MCF 10A (cell line): ENCODE measurements at regions of chr12 and their contacts with region 1.

Region 1: DNA sequence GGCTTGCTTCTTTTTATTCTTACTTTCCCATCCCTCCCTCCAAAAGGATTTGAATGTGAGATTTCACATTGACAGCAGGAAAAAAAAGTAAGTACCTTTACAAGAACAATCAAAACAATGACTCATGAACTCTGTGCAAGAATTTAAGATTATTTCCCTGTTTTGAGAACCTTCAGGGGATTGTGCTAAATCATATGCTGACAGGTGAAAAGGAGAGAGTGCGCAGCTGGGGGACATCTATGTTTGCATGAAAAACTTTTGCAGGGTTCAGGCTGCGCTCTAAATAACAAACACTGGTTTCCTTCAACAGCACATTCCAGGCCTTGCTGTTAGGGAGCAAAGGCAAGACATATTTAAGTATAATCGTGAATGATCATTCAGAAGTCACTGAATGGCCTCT is 27.3 kb downstream of the RERG start:
- DNase-seq: peak; percentile 74
- H3K4me3 Mint-ChIP-seq: peak overlapping the region; percentile 22
- H3K27ac Mint-ChIP-seq: peak overlapping the region; percentile 84
- H3K4me1 Mint-ChIP-seq: peaks cover 37% of the 10 kb centered on the region
- H3K27me3 Mint-ChIP-seq: no peaks in the 10 kb centered on the region
- CTCF ChIP-seq: no peak

Region 2: GRCh38 chr12:15212930-15213329 is 19.0 kb after region 1 on chr12:
- CTCF ChIA-PET with region 1: no interaction called
- POLR2A ChIA-PET with region 1: interaction called, 9 read pairs
- intact Hi-C with region 1: loop called (anchors 1 kb)
- DNase-seq: no peak
- H3K4me3 Mint-ChIP-seq: no peak overlapping the region
- H3K27ac Mint-ChIP-seq: no peak overlapping the region
- H3K4me1 Mint-ChIP-seq: peaks cover 45% of the 10 kb centered on the region
- H3K27me3 Mint-ChIP-seq: no peaks in the 10 kb centered on the region
- CTCF ChIP-seq: no peak

Region 3: GRCh38 chr12:15244341-15244740 is 50.4 kb after region 1 on chr12:
- CTCF ChIA-PET with region 1: no interaction called
- POLR2A ChIA-PET with region 1: no interaction called
- intact Hi-C with region 1: no loop called
- DNase-seq: no peak
- H3K4me3 Mint-ChIP-seq: no peak overlapping the region
- H3K27ac Mint-ChIP-seq: no peak overlapping the region
- H3K4me1 Mint-ChIP-seq: peaks cover 10% of the 10 kb centered on the region
- H3K27me3 Mint-ChIP-seq: no peaks in the 10 kb centered on the region
- CTCF ChIP-seq: no peak